MCF 10A (cell line): ENCODE measurements at regions of chr10 and their contacts with region 1.

Region 1: GRCh38 chr10:111598436-111599059 is 521.7 kb downstream of the ADRA2A start:
- DNase-seq: peak; percentile 67
- H3K4me3 Mint-ChIP-seq: no peak overlapping the region
- H3K27ac Mint-ChIP-seq: no peak overlapping the region
- H3K4me1 Mint-ChIP-seq: no peaks in the 10 kb centered on the region
- H3K27me3 Mint-ChIP-seq: no peaks in the 10 kb centered on the region
- CTCF ChIP-seq: peak; percentile 80

Region 2: GRCh38 chr10:111076191-111076681 is 522.3 kb before region 1 on chr10:
- CTCF ChIA-PET with region 1: interaction called, 42 read pairs
- POLR2A ChIA-PET with region 1: no interaction called
- intact Hi-C with region 1: loop called (anchors 1 kb)
- DNase-seq: peak; percentile 42
- H3K4me3 Mint-ChIP-seq: peak overlapping the region; percentile 69
- H3K27ac Mint-ChIP-seq: no peak overlapping the region
- H3K4me1 Mint-ChIP-seq: no peaks in the 10 kb centered on the region
- H3K27me3 Mint-ChIP-seq: peaks cover 46% of the 10 kb centered on the region
- CTCF ChIP-seq: peak; percentile 88

Region 3: GRCh38 chr10:111281516-111281915 is 317.0 kb before region 1 on chr10:
- CTCF ChIA-PET with region 1: interaction called, 11 read pairs
- POLR2A ChIA-PET with region 1: no interaction called
- intact Hi-C with region 1: no loop called
- DNase-seq: peak; percentile 25
- H3K4me3 Mint-ChIP-seq: no peak overlapping the region
- H3K27ac Mint-ChIP-seq: no peak overlapping the region
- H3K4me1 Mint-ChIP-seq: no peaks in the 10 kb centered on the region
- H3K27me3 Mint-ChIP-seq: no peaks in the 10 kb centered on the region
- CTCF ChIP-seq: peak; percentile 29

Region 4: GRCh38 chr10:111360260-111360925 is 238.2 kb before region 1 on chr10:
- CTCF ChIA-PET with region 1: interaction called, 3 read pairs
- POLR2A ChIA-PET with region 1: no interaction called
- intact Hi-C with region 1: loop called (anchors 10 kb)
- DNase-seq: peak; percentile 63
- H3K4me3 Mint-ChIP-seq: no peak overlapping the region
- H3K27ac Mint-ChIP-seq: no peak overlapping the region
- H3K4me1 Mint-ChIP-seq: no peaks in the 10 kb centered on the region
- H3K27me3 Mint-ChIP-seq: peaks cover 61% of the 10 kb centered on the region
- CTCF ChIP-seq: peak; percentile 66

Region 5: DNA sequence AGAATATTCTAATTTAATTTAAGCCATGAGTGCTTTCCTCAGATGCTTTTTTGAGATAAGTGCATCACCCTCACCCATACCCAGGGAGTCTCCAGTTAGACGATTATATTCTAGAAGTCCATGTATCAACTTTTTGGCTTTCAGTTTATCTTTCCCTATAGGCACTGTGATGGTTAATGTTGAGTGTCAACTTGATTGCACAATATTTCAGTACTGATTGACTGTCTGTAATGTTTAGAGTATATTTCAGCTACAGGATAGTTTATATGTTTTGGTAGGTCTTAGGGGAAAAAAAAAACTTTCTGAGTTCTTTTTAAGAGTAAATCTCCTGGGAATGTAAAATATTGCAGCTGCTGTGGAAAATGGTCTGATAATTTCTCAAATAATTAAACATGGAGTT is 13.7 kb after region 1 on chr10:
- CTCF ChIA-PET with region 1: interaction called, 13 read pairs
- POLR2A ChIA-PET with region 1: interaction called, 7 read pairs
- intact Hi-C with region 1: no loop called
- DNase-seq: no peak
- H3K4me3 Mint-ChIP-seq: no peak overlapping the region
- H3K27ac Mint-ChIP-seq: no peak overlapping the region
- H3K4me1 Mint-ChIP-seq: no peaks in the 10 kb centered on the region
- H3K27me3 Mint-ChIP-seq: no peaks in the 10 kb centered on the region
- CTCF ChIP-seq: no peak

Region 6: GRCh38 chr10:111732166-111732785 is 133.7 kb after region 1 on chr10:
- CTCF ChIA-PET with region 1: no interaction called
- POLR2A ChIA-PET with region 1: no interaction called
- intact Hi-C with region 1: no loop called
- DNase-seq: no peak
- H3K4me3 Mint-ChIP-seq: no peak overlapping the region
- H3K27ac Mint-ChIP-seq: no peak overlapping the region
- H3K4me1 Mint-ChIP-seq: no peaks in the 10 kb centered on the region
- H3K27me3 Mint-ChIP-seq: peaks cover 21% of the 10 kb centered on the region
- CTCF ChIP-seq: no peak